Sigmoid colon (tissue), 7 donors: ENCODE measurements at regions of chr1 and their contacts with region 1.

Region 1: GRCh38 chr1:46512135-46512791 is 22.6 kb downstream of the DMBX1 start:
- DNase-seq: no peak
- H3K4me3 ChIP-seq: no peak overlapping the region
- H3K27ac ChIP-seq: no peak overlapping the region
- H3K4me1 ChIP-seq: no peaks in the 10 kb centered on the region
- H3K27me3 ChIP-seq: peaks cover 0 to 8% (median 0%) of the 10 kb centered on the region in 3 donors
- CTCF ChIP-seq: no peak
- EP300 ChIP-seq: no peak
- POLR2A ChIP-seq: no peak

Region 2: GRCh38 chr1:46489638-46490405 is 22.4 kb before region 1 on chr1 and contains the start of gene DMBX1:
- intact Hi-C with region 1: loop called (anchors 2 kb)
- DNase-seq: no peak
- H3K4me3 ChIP-seq: peak within 1 kb of the TSS in 3 of 4 donors; percentile 23 to 44 (median 38)
- H3K27ac ChIP-seq: no peak within 1 kb of the TSS
- H3K4me1 ChIP-seq: peaks cover 0 to 28% (median 22%) of the 10 kb centered on the region in 4 donors
- H3K27me3 ChIP-seq: peaks cover 69 to 100% (median 95%) of the 10 kb centered on the region in 3 donors
- CTCF ChIP-seq: no peak
- EP300 ChIP-seq: no peak
- POLR2A ChIP-seq: no peak
- total RNA-seq, gene DMBX1: not detected